Heart right ventricle (tissue), 16 donors: ENCODE measurements at regions of chr3 and their contacts with region 1.

Region 1: DNA sequence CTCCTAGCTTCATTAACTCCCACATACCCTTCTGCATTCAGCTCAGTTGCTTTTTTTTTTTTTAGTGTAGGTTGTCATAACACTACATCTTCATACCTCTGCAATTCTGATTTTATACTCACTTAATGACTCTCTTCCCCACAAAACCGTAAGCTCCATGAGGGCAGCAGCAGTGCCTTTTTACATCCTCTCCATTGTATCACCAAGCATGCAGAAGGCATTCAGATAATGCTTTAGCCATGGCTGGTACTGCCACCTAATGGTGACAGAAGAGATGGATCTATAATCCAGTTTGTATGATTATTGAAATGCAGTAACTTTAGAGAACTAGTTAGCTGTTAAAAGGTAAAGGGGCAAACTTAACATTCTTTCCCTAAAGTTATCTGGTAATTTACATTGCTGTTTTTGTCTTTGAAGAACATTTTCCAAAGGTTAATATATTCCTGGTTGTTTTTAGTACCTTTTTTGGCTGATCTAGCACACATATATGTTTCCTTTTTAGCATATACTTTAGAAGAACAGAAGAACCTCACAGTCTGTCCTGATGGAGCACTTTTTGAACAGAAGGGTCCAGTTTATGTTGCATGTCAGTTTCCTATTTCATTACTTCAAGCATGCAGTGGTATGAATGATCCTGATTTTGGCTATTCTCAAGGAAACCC is 36.8 kb downstream of the ATP1B3 start:
- DNase-seq: peak in 1 of 2 donors; percentile 53
- ATAC-seq: peak in 6 of 8 donors; percentile 61 to 72 (median 64)
- H3K4me3 ChIP-seq: no peak overlapping the region
- H3K27ac ChIP-seq: no peak overlapping the region
- H3K4me1 ChIP-seq: no peaks in the 10 kb centered on the region
- H3K27me3 ChIP-seq: no peaks in the 10 kb centered on the region
- CTCF ChIP-seq: peak; percentile 44 to 84 (median 72)

Region 2: DNA sequence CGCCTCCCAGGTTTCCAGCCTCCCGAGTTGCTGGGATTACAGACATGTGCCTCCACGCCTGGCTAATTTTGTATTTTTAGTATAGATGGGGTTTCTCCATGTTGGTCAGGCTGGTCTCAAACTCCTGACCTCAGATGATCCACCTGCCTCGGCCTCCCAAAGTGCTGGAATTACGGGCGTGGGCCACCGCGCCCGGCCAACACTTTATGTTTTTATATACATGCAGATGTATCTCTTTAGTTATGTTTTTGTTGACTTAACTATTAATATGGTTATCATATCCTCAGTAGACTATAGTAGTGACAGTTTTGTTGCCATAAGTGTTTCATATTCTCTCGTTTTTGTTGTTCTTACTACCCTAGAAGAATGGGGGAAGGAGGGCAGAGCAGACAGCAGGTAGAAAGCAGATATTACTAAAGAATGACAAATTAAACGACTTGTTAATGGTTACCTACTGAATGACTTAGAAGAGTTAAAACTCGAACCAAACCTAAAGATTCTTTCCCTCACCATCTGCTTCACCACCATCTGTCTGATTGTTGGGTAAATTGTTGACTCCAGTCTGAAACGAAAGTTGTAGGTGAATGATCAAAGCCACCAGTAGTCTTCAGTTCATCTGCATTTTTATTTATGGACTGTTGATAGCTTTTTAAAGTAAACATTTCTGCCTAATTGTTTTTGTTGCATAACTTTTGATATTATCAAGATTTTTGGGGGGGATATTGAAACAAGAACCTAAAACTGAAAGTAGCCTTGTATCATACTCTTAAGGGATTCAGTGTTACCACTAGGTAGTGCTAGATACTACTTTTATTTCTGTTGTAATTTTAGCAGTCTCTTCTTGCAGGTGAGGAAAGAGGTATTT is 337.2 kb before region 1 on chr3:
- intact Hi-C with region 1: loop called in 5 of 10 experiments (anchors 2 to 10 kb)
- DNase-seq: no peak
- ATAC-seq: peak in 4 of 8 donors; percentile 57 to 64 (median 60)
- H3K4me3 ChIP-seq: no peak overlapping the region
- H3K27ac ChIP-seq: peak overlapping the region in 1 of 10 donors; percentile 10
- H3K4me1 ChIP-seq: peaks cover 0 to 6% (median 0%) of the 10 kb centered on the region in 9 donors
- H3K27me3 ChIP-seq: no peaks in the 10 kb centered on the region
- CTCF ChIP-seq: peak in 8 of 9 donors; percentile 23 to 73 (median 60)

Region 3: DNA sequence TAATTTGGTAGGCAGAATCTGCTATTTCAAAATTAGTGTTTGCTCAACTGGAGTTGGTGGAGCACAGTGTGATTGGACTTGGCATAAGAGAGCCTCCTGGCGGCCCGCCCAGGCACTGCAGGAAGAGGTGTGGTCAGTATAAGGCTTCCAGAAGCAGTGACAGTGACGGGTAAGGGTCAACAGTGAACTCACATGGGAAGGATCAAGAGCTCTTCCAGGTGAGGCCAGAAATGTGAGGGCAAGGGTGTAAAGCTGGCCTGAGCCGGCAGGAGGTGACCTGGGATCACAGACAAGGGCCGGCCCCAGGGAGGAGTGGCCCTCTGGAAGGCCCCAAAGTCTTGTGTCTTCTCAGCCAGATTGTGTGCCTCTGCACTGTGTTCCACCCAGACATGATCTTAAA is 268.4 kb before region 1 on chr3:
- intact Hi-C with region 1: loop called in 1 of 10 experiments (anchors 10 kb)
- DNase-seq: peak; percentile 69 to 84
- ATAC-seq: peak; percentile 62 to 90 (median 80)
- H3K4me3 ChIP-seq: no peak overlapping the region
- H3K27ac ChIP-seq: no peak overlapping the region
- H3K4me1 ChIP-seq: peaks cover 0 to 7% (median 0%) of the 10 kb centered on the region in 9 donors
- H3K27me3 ChIP-seq: no peaks in the 10 kb centered on the region
- CTCF ChIP-seq: peak; percentile 34 to 82 (median 64)

Region 4: DNA sequence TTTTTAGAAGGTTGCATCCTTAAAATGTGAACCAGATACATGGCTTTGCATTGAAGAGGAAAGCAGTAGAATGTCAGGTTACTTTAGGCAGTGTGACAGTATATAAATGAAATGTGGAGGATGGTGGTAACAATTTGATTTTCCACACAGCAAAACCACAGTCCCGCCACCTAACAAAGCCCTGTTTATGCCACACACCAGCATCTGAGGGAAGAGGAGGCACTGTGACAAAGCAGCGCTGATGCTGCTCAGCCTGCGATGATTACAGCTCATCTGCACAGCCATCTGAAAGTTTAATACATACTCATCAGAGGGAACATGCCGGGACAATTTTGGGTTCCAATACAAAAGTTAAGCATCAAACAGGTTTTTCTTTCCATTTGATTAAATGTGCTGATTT is 166.3 kb before region 1 on chr3:
- intact Hi-C with region 1: loop called in 1 of 10 experiments (anchors 10 kb)
- DNase-seq: no peak
- ATAC-seq: no peak
- H3K4me3 ChIP-seq: no peak overlapping the region
- H3K27ac ChIP-seq: no peak overlapping the region
- H3K4me1 ChIP-seq: peaks cover 0 to 28% (median 22%) of the 10 kb centered on the region in 9 donors
- H3K27me3 ChIP-seq: no peaks in the 10 kb centered on the region
- CTCF ChIP-seq: no peak

Region 5: GRCh38 chr3:141782454-141782853 is 130.8 kb before region 1 on chr3:
- intact Hi-C with region 1: loop called in 1 of 10 experiments (anchors 5 kb)
- DNase-seq: no peak
- ATAC-seq: peak in 1 of 8 donors; percentile 44
- H3K4me3 ChIP-seq: no peak overlapping the region
- H3K27ac ChIP-seq: no peak overlapping the region
- H3K4me1 ChIP-seq: no peaks in the 10 kb centered on the region
- H3K27me3 ChIP-seq: peaks cover 0 to 3% (median 0%) of the 10 kb centered on the region in 7 donors
- CTCF ChIP-seq: peak in 6 of 9 donors; percentile 27 to 48 (median 32)